ENCODE measurements at regions of chr15 and their contacts with region 1.

Region 1: DNA sequence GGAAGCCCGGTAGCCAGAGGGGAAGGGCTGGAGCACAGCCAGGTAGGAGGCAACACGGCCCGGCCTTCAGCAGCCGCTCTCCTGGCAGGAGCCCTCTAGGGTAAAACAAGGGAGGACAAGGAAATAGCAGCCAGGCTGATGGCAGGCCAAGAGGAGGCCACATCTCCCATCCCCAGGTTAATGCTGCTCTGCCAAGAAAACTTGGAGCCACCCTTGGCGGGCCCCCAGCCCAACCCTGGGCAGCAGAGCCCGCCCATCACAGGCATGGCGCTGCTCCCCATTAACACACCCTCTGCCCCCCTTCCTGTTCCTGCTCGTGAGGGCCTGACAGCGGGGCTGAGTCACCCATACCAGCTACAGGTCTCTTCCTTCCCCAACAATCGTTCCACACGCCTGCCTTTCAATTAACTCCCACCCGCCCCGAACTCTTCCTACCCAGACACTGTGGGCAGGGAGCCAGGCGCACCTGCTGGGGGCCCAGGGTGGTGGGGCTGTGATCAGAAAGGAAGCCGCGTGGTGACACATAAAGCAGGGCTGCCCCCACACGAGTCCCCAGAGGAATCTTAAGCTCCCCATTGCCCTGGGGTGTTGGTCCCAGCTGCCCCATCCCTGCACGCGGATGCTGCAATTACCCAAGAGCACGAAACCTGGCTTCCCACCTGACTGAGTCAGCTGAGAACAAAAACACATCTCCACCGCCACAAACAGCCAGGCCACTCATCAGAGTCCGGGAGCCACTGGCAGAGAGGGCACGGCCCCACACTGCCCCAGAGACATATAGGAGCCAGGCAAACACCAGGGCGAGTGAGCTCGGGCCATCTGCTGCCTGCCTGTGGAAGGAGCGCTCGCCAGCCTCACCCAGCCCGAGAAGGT is at the start of gene C15orf62:
- DNase-seq: no peak
- ATAC-seq: peak; percentile 40
- total RNA-seq, gene C15orf62: 0.49 TPM

Region 2: GRCh38 chr15:39495871-39496840 is 1273.4 kb before region 1 on chr15:
- intact Hi-C with region 1: loop called (anchors 5 kb)
- DNase-seq: no peak
- ATAC-seq: peak; percentile 81

Region 3: GRCh38 chr15:40803688-40804087 is 34.2 kb after region 1 on chr15:
- intact Hi-C with region 1: loop called (anchors 1 kb)
- DNase-seq: no peak
- ATAC-seq: no peak

Region 4: DNA sequence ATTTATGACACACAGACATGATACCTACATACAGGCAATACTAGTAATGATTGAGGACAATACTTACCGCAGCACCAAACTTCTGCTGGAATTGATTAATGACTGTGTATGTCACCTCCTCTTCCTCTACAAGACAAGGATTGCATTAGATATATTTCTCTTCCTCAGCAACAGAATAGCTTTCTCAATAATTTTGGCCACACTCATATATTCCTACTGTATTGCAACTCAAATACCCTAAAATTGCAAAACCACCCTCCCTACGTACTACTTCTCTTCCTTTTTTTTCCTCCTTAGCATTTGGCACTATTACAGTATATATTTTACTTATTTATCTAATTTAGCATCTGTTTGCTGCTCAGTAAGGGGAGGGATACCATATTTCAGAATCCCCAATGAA is 446.2 kb after region 1 on chr15:
- intact Hi-C with region 1: no loop called
- DNase-seq: no peak
- ATAC-seq: no peak